ENCODE measurements at regions of chr11 and their contacts with region 1.

Region 1: DNA sequence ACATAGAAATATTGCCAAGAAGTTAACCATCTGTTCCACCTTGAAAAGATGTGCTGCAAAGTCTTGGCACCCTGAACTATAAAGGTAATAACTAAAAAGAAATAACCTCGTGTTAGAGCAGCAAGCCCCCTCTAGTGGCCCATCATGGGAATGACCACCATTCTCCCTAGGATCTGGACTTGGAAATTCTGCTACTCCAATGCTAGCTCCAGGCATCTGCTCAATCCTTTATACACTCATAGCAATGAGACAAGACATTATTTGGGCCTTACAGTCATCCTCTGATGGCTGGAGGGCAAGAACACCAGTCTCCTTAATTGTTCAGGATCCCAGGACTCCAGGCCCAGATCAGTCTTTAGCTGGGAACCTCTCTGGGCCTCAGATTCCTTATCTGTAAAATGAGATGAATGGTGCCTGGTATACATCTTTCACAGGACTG is 76.0 kb downstream of the CWC15 start:
- DNase-seq: no peak
- ATAC-seq: peak; percentile 82
- H3K4me3 ChIP-seq: no peak overlapping the region
- H3K27ac ChIP-seq: no peak overlapping the region
- H3K4me1 ChIP-seq: no peaks in the 10 kb centered on the region
- H3K27me3 ChIP-seq: no peaks in the 10 kb centered on the region
- CTCF ChIP-seq: peak; percentile 95

Region 2: DNA sequence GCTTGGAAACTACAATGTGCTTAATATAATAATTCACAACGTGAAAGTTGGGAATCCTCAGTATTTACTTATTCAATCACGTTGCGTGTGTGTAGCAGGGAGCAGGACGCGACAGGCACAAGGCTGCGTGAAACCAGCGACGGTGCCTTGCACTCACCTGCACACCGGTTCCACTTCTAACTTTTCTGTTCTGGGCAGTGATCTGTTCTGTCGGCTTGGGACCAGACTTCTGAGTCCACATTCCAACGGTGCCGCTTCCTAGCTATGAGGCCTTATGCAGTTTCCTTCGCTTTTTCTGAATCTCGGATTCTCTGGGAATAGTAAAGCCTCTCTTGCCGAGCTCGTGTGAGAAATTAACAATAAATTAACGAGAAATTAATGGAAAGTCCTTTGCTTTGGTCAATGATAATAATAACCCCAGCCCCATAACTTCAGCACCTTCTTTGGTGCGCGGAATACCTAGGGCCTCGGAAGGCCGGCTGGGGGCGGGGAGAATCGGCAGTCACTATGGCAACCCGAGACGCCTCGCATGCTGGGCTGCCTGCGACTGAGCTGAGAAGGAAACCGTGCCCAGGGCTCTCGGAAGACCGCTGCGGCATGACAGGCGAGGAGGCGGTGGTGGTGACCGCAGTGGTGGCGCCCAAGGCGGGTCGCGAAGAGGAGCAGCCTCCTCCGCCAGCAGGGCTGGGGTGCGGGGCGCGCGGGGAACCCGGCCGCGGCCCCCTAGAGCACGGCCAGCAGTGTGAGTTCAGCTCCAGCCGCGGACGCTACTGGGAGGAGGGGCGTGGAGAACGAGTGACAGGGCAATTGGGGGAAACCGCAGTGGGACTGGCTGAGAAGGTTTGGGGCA is 385.2 kb before region 1 on chr11 and contains the start of gene C11orf97:
- CTCF ChIA-PET with region 1: no interaction called
- POLR2A ChIA-PET with region 1: no interaction called
- in situ Hi-C with region 1: no loop called
- intact Hi-C with region 1: loop called (anchors 10 kb)
- DNase-seq: no peak
- ATAC-seq: peak; percentile 89
- H3K4me3 ChIP-seq: peak within 1 kb of the TSS; percentile 51 to 59
- H3K27ac ChIP-seq: no peak within 1 kb of the TSS
- H3K4me1 ChIP-seq: 0 out of 2 replicates have a peak, but pooled peaks cover 4% of the 10 kb centered on the region
- H3K27me3 ChIP-seq: peaks cover 14% of the 10 kb centered on the region
- CTCF ChIP-seq: no peak
- total RNA-seq, gene C11orf97: not detected

Region 3: DNA sequence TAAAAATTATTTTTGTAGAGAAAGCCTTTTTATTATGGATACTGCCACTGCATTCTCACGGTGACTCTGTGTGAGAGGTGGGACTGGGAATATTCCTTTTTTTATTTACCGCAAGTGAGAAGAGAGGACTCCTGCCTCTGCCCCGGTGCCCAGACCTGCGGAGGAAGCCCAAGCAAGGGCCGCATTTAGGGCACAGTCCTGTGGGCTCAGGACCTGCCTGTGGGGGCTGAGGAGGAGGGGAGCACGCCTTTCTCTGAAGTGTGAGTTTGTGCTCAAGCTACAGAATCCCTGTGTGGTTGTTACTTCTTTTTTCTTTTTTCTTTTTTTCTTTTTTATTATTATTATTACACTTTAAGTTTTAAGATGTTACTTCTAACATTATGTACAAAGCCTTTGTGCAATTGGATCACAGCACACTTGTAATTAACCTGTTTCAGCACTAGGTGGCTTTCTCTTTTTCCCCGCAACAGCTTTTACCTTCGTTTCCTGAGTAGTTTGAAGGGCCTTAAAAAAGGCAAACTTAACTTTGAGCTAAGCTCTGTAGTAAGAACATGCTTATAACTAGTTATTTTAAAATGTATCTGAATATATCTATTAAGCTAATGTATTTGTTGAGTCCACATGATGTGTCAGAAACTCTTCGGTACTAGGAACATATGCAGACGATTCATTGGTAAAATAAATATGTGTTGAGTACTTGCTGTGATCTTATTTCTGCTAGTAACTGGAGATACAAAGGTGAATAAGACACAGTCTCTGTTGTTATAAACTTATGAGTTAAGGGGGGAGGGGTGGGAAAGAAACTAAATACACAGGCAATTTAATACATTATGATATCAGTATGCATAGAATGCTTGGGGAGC is 110.9 kb before region 1 on chr11:
- CTCF ChIA-PET with region 1: interaction called, 3 read pairs
- POLR2A ChIA-PET with region 1: no interaction called
- in situ Hi-C with region 1: no loop called
- intact Hi-C with region 1: loop called (anchors 1 kb)
- DNase-seq: no peak
- ATAC-seq: peak; percentile 74
- H3K4me3 ChIP-seq: no peak overlapping the region
- H3K27ac ChIP-seq: no peak overlapping the region
- H3K4me1 ChIP-seq: peaks cover 27% of the 10 kb centered on the region
- H3K27me3 ChIP-seq: no peaks in the 10 kb centered on the region
- CTCF ChIP-seq: peak; percentile 80

Region 4: DNA sequence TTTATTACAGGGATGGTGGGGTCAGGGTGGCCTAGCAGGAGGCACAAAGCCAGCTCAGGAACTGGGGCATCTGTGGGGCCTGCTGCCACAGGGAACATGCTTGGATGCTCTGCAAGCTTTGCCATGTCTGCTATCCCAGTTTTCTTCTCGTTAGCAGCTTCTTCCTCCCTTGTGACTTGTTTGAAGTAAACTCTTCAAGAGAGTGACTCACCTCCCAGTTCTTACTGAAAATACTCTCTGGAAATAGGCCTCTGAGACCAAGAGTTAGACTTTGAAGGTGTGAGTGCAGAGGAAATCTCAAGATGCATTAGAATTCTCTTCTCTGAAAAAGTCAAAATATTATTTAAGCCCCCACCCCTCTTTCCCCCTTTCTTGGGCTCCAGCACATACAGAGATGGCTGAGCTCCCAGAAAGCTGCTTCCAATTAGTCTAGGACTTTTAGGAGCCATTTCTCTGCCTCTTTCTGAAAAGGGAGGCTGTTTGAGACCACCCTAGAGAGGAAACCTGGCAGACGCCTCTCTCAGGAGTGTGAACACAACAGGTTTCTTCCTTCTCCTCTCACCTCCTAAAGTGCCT is 60.9 kb after region 1 on chr11:
- CTCF ChIA-PET with region 1: no interaction called
- POLR2A ChIA-PET with region 1: no interaction called
- in situ Hi-C with region 1: no loop called
- intact Hi-C with region 1: no loop called
- DNase-seq: no peak
- ATAC-seq: no peak
- H3K4me3 ChIP-seq: no peak overlapping the region
- H3K27ac ChIP-seq: no peak overlapping the region
- H3K4me1 ChIP-seq: no peaks in the 10 kb centered on the region
- H3K27me3 ChIP-seq: no peaks in the 10 kb centered on the region
- CTCF ChIP-seq: no peak

Region 5: DNA sequence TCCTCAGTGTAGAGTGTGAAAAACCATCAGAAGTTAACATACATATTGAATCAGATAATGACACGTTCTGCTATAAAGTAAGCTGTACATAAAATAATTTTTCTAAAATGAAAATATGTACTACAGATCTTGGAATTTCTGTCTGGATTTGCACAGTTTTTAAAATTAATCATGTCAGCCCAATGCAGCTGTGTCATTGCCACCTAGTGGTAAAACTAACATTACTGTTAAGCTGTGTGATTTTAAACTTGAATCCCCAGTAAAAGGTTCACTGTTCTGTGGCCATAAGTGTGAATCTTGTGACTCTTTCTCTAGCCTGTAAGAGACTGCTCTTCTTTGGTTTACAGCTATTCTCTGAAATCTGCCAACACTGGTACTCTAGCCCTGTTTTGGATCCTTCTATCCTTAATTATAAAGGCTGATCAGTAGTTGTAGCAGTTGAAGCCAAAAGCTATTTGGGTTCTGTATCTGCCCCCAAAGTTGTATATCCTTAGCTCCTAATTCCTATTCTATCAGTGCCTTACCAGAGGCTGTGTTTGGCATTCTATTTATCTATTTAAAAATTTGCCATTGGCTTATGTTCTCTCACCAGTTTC is 1496.5 kb after region 1 on chr11:
- CTCF ChIA-PET with region 1: no interaction called
- POLR2A ChIA-PET with region 1: no interaction called
- in situ Hi-C with region 1: no loop called
- intact Hi-C with region 1: no loop called
- DNase-seq: peak; percentile 25
- ATAC-seq: no peak
- H3K4me3 ChIP-seq: no peak overlapping the region
- H3K27ac ChIP-seq: no peak overlapping the region
- H3K4me1 ChIP-seq: peaks cover 13% of the 10 kb centered on the region
- H3K27me3 ChIP-seq: no peaks in the 10 kb centered on the region
- CTCF ChIP-seq: peak; percentile 81; the same call in 1 of the 2 replicates

Measured in Panc1 (cell line).